Activated CD4-positive, alpha-beta T cell treated with anti-CD3 and anti-CD28 coated beads, Interleukin-2, amount 10 ng/mL, durations not matched to agents 24 days and 14 days (primary cell): ENCODE measurements at regions of chr22 and their contacts with region 1.

Region 1: DNA sequence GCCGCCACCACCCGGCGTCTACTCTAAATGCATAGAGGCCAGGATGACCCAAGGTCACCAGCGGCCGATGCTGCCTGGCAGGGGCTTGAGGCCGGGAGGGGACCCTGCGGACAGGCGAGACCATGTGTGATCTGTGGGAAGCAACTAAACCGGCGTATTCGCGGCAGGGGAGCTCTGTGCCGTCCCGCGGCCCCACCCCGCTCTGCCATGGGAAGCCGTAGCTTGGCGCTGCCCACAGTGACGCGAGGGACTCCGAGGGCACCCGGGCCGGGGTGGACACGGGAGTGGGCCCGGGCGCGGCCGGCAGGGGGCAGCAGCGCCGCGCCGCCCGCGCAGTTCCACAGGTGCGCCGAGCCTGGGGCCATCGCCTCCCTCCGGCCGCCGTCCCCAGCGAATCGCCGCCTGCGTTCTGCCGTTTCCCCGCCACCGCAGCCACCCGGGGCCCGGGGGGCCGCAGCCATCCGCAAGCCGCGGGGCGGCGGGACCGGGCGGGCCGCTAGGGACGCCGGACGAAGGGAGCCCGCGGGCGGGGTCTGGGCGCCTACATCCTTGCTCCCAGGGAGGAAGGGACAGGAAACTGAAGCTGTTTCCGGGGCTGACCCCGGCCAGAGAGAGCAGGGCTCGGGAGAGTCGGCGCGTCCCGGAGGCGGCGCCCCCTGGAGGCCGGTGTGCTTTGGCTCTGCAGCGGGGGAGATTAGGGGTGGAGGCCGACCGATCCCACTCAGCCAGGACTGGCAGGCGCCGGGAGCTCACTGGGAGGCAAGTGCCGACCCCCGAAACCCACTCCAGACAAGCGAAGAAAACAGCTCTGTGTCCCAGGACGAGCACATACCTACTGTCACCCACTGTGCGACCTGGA is 12.5 kb upstream of the HDHD5 start:
- DNase-seq: peak; percentile 94
- H3K4me3 Mint-ChIP-seq: peak overlapping the region; percentile 87
- H3K27ac Mint-ChIP-seq: peak overlapping the region; percentile 46
- H3K4me1 Mint-ChIP-seq: peaks cover 6% of the 10 kb centered on the region
- H3K27me3 Mint-ChIP-seq: peaks cover 8% of the 10 kb centered on the region

Region 2: GRCh38 chr22:17077255-17077654 is 94.3 kb before region 1 on chr22:
- intact Hi-C with region 1: loop called (anchors 1 kb)
- DNase-seq: no peak
- H3K4me3 Mint-ChIP-seq: no peak overlapping the region
- H3K27ac Mint-ChIP-seq: no peak overlapping the region
- H3K4me1 Mint-ChIP-seq: peaks cover 18% of the 10 kb centered on the region
- H3K27me3 Mint-ChIP-seq: peaks cover 29% of the 10 kb centered on the region

Region 3: DNA sequence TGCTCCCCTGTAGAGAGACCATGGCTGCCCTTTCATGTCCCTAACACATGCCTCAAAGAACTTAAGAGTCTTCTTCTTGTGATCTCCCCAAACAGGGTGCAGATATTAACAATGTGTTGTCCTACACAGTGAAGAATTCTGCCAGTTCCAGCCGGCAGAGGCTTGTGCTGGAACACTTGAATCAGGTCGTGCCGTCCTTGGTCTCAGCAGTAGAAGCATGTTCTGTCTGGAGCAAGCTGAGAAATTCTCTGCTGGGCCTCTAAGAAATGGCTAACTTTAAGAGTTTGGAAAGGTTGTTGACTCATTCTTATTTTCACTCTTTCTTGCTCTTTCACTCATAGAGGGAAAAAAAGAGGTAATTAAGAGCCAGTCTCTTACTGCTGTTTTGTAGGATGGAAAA is 320.7 kb after region 1 on chr22:
- intact Hi-C with region 1: no loop called
- DNase-seq: no peak
- H3K4me3 Mint-ChIP-seq: no peak overlapping the region
- H3K27ac Mint-ChIP-seq: no peak overlapping the region
- H3K4me1 Mint-ChIP-seq: no peaks in the 10 kb centered on the region
- H3K27me3 Mint-ChIP-seq: peaks cover 5% of the 10 kb centered on the region